ENCODE measurements at regions of chr15 and their contacts with region 1.

Region 1: DNA sequence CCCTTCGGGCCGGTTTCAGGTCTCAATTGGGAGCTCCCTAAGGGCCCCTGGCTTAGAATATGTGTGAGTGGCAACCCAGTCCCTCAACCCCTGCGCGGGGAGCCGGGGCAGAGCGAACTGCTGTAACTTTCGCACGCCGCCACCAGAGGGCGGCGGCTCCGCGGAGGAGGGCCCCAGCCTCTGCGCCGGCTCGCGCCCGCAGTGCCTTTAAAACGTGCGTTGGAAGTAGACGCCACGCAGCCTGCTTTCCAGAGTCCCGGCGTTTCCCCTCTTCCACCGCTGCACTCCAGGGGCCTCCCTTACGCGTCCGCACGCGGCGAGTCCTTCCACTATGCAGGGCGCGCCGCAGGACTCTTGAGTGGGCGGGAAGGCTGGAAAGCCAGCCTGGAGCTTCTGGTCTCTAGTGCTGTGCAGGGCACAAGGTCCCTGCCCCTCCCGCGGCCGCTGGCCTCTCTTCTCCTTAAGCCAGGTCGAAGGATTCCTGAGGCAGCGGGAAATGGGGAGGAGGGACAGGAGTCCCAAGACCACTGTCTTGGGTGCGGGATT is 23.7 kb upstream of the RNU6-1 start:
- DNase-seq: peak; percentile 85 to 92 (median 88)
- H3K4me3 ChIP-seq: peak overlapping the region; percentile 30
- H3K27ac ChIP-seq: peak overlapping the region in 1 of 2 donors; percentile 22
- H3K4me1 ChIP-seq: peaks cover 3% of the 10 kb centered on the region
- H3K27me3 ChIP-seq: no peaks in the 10 kb centered on the region
- CTCF ChIP-seq: peak; percentile 88 to 95 (median 94)
- EP300 ChIP-seq: no peak
- POLR2A ChIP-seq: no peak

Region 2: DNA sequence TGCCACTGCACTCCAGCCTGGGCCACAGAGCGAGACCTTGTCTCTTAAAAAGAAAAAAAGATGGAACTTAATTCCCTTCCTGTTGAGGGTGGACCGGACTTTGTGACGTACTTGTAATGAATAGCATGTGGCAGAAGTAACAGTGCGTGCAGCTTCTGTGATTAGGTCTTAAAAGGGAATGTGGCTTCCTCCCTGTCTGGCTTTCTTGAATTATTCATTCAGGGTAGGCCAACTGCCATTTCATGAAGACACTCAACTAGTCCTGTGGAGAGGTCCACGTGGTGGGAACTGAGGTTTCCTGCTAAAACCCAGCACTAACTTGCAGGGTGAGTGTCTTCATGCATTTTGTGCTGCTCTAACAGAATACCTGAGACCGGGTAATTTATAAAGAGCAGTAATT is 91.7 kb after region 1 on chr15:
- intact Hi-C with region 1: loop called in 2 of 4 experiments (anchors 10 kb)
- DNase-seq: no peak
- H3K4me3 ChIP-seq: no peak overlapping the region
- H3K27ac ChIP-seq: no peak overlapping the region
- H3K4me1 ChIP-seq: peaks cover 3% of the 10 kb centered on the region
- H3K27me3 ChIP-seq: no peaks in the 10 kb centered on the region
- CTCF ChIP-seq: no peak
- EP300 ChIP-seq: no peak
- POLR2A ChIP-seq: no peak

Region 3: GRCh38 chr15:67967871-67968431 is 104.4 kb after region 1 on chr15:
- intact Hi-C with region 1: loop called in 1 of 4 experiments (anchors 10 kb)
- DNase-seq: peak; percentile 79 to 90 (median 83)
- H3K4me3 ChIP-seq: peak overlapping the region; percentile 24
- H3K27ac ChIP-seq: peak overlapping the region in 1 of 2 donors; percentile 17
- H3K4me1 ChIP-seq: peaks cover 7% of the 10 kb centered on the region
- H3K27me3 ChIP-seq: no peaks in the 10 kb centered on the region
- CTCF ChIP-seq: no peak
- EP300 ChIP-seq: no peak
- POLR2A ChIP-seq: no peak

Region 4: GRCh38 chr15:68042156-68042854 is 178.8 kb after region 1 on chr15:
- intact Hi-C with region 1: no loop called
- DNase-seq: no peak
- H3K4me3 ChIP-seq: no peak overlapping the region
- H3K27ac ChIP-seq: no peak overlapping the region
- H3K4me1 ChIP-seq: no peaks in the 10 kb centered on the region
- H3K27me3 ChIP-seq: no peaks in the 10 kb centered on the region
- CTCF ChIP-seq: no peak
- EP300 ChIP-seq: no peak
- POLR2A ChIP-seq: no peak

Region 5: DNA sequence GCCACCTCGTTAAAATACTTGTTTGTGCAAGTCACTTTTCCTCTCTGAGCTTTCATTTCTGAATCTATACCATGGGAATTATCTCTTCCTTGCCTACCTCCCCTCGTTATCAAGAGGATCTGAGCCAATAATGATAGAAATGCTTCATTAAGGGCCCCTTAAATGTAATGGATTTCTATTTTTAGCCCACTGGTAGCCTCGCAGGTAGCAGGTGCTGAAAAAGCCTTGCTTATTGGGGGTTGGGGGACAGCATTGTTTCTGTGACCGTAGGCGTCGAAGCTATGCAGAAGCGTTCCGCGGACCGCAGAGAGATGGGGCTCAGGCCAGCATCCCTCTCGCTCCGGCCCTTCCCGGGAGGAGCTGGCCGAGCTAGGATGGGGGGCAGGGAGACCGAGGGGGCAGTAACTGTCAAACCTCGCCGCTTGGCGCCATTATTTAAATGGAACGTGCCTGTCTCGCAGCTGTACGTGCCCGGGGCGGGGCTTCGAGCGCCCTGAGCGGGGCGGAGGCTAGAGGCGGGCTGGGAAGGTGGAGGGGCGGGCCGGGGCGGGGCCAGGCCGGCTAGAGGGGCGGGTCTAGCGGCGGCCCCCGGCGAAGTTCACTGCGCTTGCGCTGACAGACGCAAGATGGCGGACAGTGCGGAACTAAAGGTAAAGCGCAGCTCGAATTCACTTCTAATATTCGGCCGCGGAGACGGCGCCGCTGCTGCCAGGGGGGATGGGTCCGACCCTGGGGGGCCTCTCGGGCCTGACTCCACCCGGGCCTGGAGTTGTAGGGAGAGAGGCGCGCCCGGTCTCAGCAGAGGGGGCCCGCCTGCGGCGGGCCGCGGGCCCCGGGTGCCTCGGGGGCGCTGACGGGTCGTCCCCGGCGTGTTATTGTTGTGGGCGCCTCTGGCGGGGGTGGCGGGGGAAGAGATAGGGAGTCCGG is 190.4 kb after region 1 on chr15 and contains the start of gene PIAS1:
- intact Hi-C with region 1: loop called in 1 of 4 experiments (anchors 10 kb)
- DNase-seq: peak; percentile 91 to 96 (median 95)
- H3K4me3 ChIP-seq: peak within 1 kb of the TSS; percentile 100
- H3K27ac ChIP-seq: peak within 1 kb of the TSS; percentile 60 to 76
- H3K4me1 ChIP-seq: peaks cover 2% of the 10 kb centered on the region
- H3K27me3 ChIP-seq: no peaks in the 10 kb centered on the region
- CTCF ChIP-seq: peak in 1 of 3 donors; percentile 46
- EP300 ChIP-seq: no peak
- POLR2A ChIP-seq: peak; percentile 84
- total RNA-seq, gene PIAS1: 39.8 to 75.4 (median 53.6) TPM

Region 6: GRCh38 chr15:68154923-68155559 is 291.5 kb after region 1 on chr15:
- intact Hi-C with region 1: loop called in 3 of 4 experiments (anchors 2 to 5 kb)
- DNase-seq: peak in 4 of 5 donors; percentile 35 to 70 (median 52)
- H3K4me3 ChIP-seq: no peak overlapping the region
- H3K27ac ChIP-seq: no peak overlapping the region
- H3K4me1 ChIP-seq: peaks cover 4% of the 10 kb centered on the region
- H3K27me3 ChIP-seq: no peaks in the 10 kb centered on the region
- CTCF ChIP-seq: peak; percentile 55 to 88 (median 82)
- EP300 ChIP-seq: no peak
- POLR2A ChIP-seq: no peak

Region 7: GRCh38 chr15:68210821-68211655 is 347.5 kb after region 1 on chr15:
- intact Hi-C with region 1: loop called in 2 of 4 experiments (anchors 1 to 5 kb)
- DNase-seq: peak; percentile 72 to 86 (median 80)
- H3K4me3 ChIP-seq: peak overlapping the region; percentile 18
- H3K27ac ChIP-seq: no peak overlapping the region
- H3K4me1 ChIP-seq: no peaks in the 10 kb centered on the region
- H3K27me3 ChIP-seq: no peaks in the 10 kb centered on the region
- CTCF ChIP-seq: peak; percentile 57 to 92 (median 87)
- EP300 ChIP-seq: no peak
- POLR2A ChIP-seq: no peak

Measured in ovary (tissue), 10 donors.